Calu3 (cell line): ENCODE measurements at regions of chr1 and their contacts with region 1.

Region 1: DNA sequence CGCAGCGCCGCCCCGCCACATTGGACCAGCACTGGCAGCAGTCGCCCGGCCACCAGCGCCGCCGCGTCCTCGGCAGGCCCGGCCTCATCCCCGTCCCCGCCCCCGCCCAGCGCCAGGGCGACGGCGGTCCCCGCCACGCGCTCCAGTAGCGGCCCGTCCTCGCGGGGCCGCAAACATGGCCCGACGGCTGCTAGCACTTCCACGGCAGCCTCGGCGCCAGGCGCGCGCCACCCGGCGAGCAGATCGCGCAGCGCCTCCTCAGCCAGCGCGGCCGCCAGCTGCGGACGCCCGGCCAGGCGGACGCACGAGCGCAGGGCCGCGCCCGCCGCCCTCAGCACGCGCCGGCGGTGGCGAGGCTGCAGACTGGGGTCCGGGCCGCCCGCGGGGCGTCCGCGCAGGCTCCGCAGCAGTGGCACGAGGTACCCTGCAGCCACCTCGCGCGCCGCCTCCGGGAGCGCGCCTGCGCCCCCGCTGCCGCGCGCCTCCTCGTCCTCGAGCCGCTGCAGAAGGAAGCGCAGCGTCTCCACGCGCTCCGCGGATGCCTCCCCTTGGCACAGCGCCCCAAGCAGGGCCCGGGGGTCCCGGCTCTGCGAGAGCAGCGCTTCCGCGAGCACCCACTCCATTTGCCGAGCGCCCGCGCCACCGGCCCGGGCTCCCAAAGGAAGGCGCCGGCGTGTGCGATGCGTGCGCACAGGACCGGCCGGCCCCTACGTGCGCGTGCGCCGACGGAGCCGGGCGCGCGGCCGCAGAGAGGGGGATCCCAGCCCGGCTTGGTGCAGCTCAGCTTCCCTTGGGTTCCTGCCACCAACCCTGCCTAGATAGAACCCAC is at the start of gene TARBP1:
- DNase-seq: peak; percentile 85
- H3K4me3 Mint-ChIP-seq: peak within 1 kb of the TSS; percentile 71
- H3K27ac Mint-ChIP-seq: peak within 1 kb of the TSS; percentile 51
- H3K4me1 Mint-ChIP-seq: peaks cover 29% of the 10 kb centered on the region
- H3K27me3 Mint-ChIP-seq: peaks cover 24% of the 10 kb centered on the region
- CTCF ChIP-seq: no peak
- total RNA-seq, gene TARBP1: 38.1 and 39.6 TPM in 2 replicates

Region 2: DNA sequence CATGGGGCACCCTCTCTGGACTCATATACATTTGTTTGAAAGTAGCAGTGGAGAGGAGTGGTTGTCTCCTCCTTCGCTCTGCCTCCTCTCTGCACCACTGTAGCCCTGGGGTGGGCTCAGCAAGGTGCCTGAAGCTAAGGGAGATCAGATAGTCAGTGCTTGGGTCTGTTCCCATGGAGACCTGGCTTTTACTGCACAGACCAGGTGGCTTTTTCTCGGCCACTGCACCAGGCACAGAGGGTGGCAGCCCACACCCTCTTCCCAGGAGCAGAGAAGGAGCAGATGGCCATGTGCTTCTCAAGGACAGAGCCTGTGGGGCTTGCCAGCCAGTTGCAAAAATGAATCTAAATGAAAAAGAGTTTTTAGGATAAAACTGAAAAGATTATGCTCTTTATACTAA is 988.2 kb before region 1 on chr1:
- CTCF ChIA-PET with region 1: no interaction called
- intact Hi-C with region 1: no loop called
- DNase-seq: no peak
- H3K4me3 Mint-ChIP-seq: no peak overlapping the region
- H3K27ac Mint-ChIP-seq: no peak overlapping the region
- H3K4me1 Mint-ChIP-seq: peaks cover 10% of the 10 kb centered on the region
- H3K27me3 Mint-ChIP-seq: no peaks in the 10 kb centered on the region
- CTCF ChIP-seq: no peak

Region 3: DNA sequence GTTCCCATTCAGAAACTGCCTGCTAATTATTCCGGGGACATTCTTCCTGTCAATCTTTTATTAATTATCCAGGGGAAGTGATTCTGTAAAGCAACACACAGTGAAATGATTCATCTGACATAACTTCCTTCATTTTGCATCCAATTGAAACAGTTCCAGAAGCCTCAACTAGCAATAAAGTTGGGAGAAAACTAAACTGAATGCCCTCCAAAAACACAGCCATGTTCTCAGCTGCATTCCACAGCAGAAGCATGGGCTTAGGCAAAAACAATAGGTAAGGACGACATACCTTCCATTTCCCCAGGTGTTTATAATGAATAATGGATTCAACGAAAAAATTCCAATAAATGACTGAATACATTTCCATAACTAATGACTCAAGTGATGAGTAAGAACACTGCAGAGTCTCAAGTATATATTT is 37.1 kb after region 1 on chr1:
- CTCF ChIA-PET with region 1: interaction called, 12 read pairs
- intact Hi-C with region 1: no loop called
- DNase-seq: no peak
- H3K4me3 Mint-ChIP-seq: no peak overlapping the region
- H3K27ac Mint-ChIP-seq: no peak overlapping the region
- H3K4me1 Mint-ChIP-seq: peaks cover 24% of the 10 kb centered on the region
- H3K27me3 Mint-ChIP-seq: no peaks in the 10 kb centered on the region
- CTCF ChIP-seq: no peak

Region 4: GRCh38 chr1:234544087-234544579 is 65.4 kb after region 1 on chr1:
- CTCF ChIA-PET with region 1: no interaction called
- intact Hi-C with region 1: no loop called
- DNase-seq: peak; percentile 63
- H3K4me3 Mint-ChIP-seq: no peak overlapping the region
- H3K27ac Mint-ChIP-seq: peak overlapping the region; percentile 33
- H3K4me1 Mint-ChIP-seq: peaks cover 38% of the 10 kb centered on the region
- H3K27me3 Mint-ChIP-seq: peaks cover 11% of the 10 kb centered on the region
- CTCF ChIP-seq: no peak